Prostate gland (tissue), 2 donors: ENCODE measurements at regions of chr18 and their contacts with region 1.

Region 1: GRCh38 chr18:8988261-8988871 is 114.1 kb upstream of the NDUFV2 start:
- DNase-seq: peak; percentile 38
- H3K4me3 ChIP-seq: no peak overlapping the region
- H3K27ac ChIP-seq: no peak overlapping the region
- H3K4me1 ChIP-seq: no peaks in the 10 kb centered on the region
- H3K27me3 ChIP-seq: no peaks in the 10 kb centered on the region
- CTCF ChIP-seq: peak; percentile 32 to 64 (median 60)
- POLR2A ChIP-seq: no peak

Region 2: GRCh38 chr18:8696749-8697211 is 291.6 kb before region 1 on chr18:
- intact Hi-C with region 1: loop called (anchors 2 kb)
- DNase-seq: peak; percentile 60
- H3K4me3 ChIP-seq: no peak overlapping the region
- H3K27ac ChIP-seq: no peak overlapping the region
- H3K4me1 ChIP-seq: no peaks in the 10 kb centered on the region
- H3K27me3 ChIP-seq: no peaks in the 10 kb centered on the region
- CTCF ChIP-seq: peak; percentile 82 to 93 (median 84)
- POLR2A ChIP-seq: no peak